B cell (primary cell): ENCODE measurements at regions of chr7 and their contacts with region 1.

Region 1: DNA sequence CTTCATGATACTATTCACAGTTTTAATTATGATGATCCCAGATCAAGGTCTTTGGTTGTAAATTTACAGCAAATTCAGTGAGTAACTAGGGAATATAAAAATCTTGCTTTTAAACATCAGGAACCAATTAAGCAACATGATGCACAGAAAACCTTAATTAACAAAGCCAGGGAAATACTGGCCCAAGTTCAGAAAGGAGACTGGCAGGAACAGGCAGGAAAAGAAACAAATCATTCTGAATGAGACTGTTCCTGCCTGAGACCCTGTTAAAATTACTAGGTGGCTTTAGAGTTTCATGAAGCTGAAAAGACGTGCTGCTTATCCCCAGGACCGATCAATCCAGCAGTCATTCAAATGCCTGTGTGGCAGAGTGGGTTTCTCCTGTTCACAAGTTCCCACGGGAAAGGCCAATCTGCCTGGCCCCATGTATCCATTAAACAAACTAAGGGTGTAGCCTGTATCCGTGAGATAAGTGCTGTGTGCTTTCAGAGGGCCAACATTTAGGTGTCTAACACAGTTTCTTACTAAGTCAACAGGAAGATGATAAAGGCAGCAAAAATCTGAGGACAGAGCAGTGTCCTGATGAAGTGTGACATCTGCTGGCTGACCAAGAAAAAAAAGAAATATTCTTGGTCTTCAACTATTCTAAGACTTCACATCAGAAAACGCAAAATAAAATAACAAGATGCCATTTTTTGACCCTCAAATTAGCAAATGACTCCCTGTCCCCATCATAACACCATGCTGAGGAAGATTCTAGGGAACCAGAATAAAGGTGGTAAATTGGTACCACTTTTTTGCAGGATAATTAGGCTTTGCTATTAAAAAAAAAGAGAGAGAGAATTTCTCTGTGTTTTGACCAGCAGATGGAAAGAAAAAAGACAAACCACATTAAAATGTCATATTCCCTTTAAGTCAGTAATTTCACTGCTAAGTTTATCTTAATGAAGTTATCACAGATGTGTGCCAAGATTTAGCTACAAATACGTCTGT is 34.2 kb downstream of the PUS7 start:
- DNase-seq: peak; percentile 59
- ATAC-seq: peak; percentile 24
- H3K4me3 ChIP-seq: no peak overlapping the region
- H3K4me3 Mint-ChIP-seq: no peak overlapping the region
- H3K27ac ChIP-seq: no peak overlapping the region
- H3K27ac Mint-ChIP-seq: peak overlapping the region; percentile 61
- H3K4me1 ChIP-seq: peaks cover 0 to 3% of the 10 kb centered on the region in 2 donors
- H3K4me1 Mint-ChIP-seq: peaks cover 5% of the 10 kb centered on the region
- H3K27me3 ChIP-seq: no peaks in the 10 kb centered on the region
- H3K27me3 Mint-ChIP-seq: no peaks in the 10 kb centered on the region
- CTCF ChIP-seq: peak; percentile 75

Region 2: GRCh38 chr7:105149827-105150226 is 338.0 kb before region 1 on chr7:
- CTCF ChIA-PET with region 1: interaction called, 3 read pairs
- POLR2A ChIA-PET with region 1: no interaction called
- intact Hi-C with region 1: loop called (anchors 1 kb)
- DNase-seq: no peak
- ATAC-seq: no peak
- H3K4me3 ChIP-seq: no peak overlapping the region
- H3K4me3 Mint-ChIP-seq: no peak overlapping the region
- H3K27ac ChIP-seq: no peak overlapping the region
- H3K27ac Mint-ChIP-seq: no peak overlapping the region
- H3K4me1 ChIP-seq: no peaks in the 10 kb centered on the region
- H3K4me1 Mint-ChIP-seq: no peaks in the 10 kb centered on the region
- H3K27me3 ChIP-seq: no peaks in the 10 kb centered on the region
- H3K27me3 Mint-ChIP-seq: no peaks in the 10 kb centered on the region
- CTCF ChIP-seq: no peak

Region 3: DNA sequence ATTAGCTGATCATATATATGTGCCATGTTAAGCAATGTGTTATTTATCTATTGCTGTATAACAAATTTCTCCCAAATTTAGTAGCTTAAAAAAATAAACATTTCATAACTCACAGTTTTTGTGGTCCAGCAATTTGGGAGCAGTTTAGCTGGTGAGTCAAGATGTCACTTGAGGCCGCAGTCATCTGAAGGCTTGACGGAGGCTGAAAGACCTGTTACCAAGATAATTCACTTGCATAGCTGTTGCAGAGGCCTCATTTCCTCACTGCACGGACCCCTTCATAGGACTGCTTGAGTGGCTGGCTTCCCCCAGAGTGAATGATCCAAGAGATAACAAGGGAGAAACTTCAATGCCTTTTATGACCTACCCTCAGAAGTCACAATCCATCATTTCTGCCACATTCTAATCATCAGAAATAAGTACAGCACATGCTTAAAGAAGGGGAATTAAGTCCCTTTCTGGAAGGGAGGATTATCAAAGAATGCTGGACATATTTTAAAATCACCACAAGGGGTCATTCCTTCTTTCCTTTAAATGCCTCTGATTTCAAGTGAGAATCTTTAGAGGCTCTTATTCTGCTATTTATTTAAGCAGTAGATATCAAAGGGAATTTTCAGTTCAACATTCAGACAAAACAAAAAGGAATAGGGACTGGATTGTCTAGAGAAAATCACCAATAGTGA is 88.7 kb before region 1 on chr7:
- CTCF ChIA-PET with region 1: interaction called, 4 read pairs
- POLR2A ChIA-PET with region 1: no interaction called
- intact Hi-C with region 1: loop called (anchors 1 kb)
- DNase-seq: peak; percentile 27
- ATAC-seq: no peak
- H3K4me3 ChIP-seq: no peak overlapping the region
- H3K4me3 Mint-ChIP-seq: no peak overlapping the region
- H3K27ac ChIP-seq: no peak overlapping the region
- H3K27ac Mint-ChIP-seq: no peak overlapping the region
- H3K4me1 ChIP-seq: no peaks in the 10 kb centered on the region
- H3K4me1 Mint-ChIP-seq: peaks cover 2% of the 10 kb centered on the region
- H3K27me3 ChIP-seq: no peaks in the 10 kb centered on the region
- H3K27me3 Mint-ChIP-seq: no peaks in the 10 kb centered on the region
- CTCF ChIP-seq: no peak

Region 4: DNA sequence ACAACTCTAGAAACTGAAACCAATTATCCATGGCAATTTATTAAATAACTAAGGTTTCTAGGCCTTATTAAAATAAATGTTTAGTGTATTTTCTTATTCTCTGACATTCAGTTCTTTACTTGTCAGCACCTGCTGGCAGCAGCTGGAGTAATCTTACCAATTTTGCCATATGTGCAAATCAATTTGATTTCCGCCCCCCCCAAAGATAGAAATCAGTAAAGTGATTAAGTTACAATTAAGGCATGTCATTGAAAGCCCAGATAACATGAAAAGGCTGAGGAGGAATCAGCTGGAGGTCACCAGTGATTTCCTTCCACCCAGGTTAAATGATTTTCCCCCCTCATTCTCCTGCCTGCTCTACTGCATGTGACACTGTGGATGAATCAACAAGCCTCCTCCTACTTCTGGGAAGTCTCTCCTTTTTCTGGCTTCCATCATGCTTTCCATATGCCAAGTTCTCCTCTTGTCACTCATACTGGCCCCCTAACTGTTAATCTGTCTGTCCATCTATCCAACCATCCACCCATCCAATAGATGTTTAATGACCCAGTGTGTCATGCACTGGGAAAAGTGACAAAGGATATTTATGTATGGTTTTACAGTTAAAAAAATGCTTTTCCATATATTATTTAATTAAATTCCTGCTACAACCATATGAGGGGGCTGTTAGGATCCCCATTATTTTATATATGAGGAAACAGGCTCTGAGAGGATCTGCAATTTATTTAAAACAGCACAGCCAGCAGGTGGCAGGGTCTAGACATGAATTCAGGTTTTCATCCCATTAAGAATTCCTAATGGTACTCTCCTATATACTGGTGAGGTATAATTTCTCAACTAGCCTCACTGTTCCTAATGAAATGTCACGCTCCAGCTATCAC is 272.0 kb after region 1 on chr7:
- CTCF ChIA-PET with region 1: no interaction called
- POLR2A ChIA-PET with region 1: no interaction called
- intact Hi-C with region 1: no loop called
- DNase-seq: peak; percentile 44
- ATAC-seq: no peak
- H3K4me3 ChIP-seq: no peak overlapping the region
- H3K4me3 Mint-ChIP-seq: no peak overlapping the region
- H3K27ac ChIP-seq: no peak overlapping the region
- H3K27ac Mint-ChIP-seq: no peak overlapping the region
- H3K4me1 ChIP-seq: no peaks in the 10 kb centered on the region
- H3K4me1 Mint-ChIP-seq: no peaks in the 10 kb centered on the region
- H3K27me3 ChIP-seq: no peaks in the 10 kb centered on the region
- H3K27me3 Mint-ChIP-seq: no peaks in the 10 kb centered on the region
- CTCF ChIP-seq: peak; percentile 55